Prostate gland (tissue), 2 donors: ENCODE measurements at regions of chr3 and their contacts with region 1.

Region 1: DNA sequence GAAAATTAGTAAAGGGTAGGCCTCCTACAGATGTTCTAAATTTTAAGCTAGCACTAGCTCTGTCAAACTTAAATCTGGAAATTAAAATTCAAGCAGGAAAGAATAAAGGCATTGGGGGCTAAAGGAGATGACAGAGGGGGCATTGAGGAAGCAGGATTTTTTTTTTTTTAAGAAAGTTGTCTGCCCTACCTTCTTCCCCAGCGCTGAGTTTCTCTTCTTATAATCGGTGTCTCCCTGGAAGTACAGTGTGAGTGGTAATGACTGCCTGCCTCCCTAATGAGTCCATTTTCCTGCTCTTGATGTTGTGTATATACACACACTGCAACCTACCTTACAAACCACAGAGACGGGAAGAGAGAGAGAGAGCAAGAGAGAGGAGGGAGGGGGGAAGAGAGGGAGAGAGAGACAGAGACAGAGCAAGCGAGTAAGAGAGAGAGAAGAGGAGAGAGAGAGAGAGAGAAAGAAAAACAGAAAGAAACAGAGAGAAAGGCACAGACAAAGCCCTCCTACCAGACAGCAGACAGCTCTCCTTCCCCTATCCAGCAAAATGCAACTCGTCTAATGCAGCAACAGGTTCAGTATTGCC is 47.0 kb downstream of the ZBTB20 start:
- DNase-seq: peak; percentile 33
- H3K4me3 ChIP-seq: peak overlapping the region; percentile 30 to 35
- H3K27ac ChIP-seq: peak overlapping the region; percentile 79 to 82
- H3K4me1 ChIP-seq: no peaks in the 10 kb centered on the region
- H3K27me3 ChIP-seq: no peaks in the 10 kb centered on the region
- CTCF ChIP-seq: no peak
- POLR2A ChIP-seq: no peak

Region 2: GRCh38 chr3:114848082-114848481 is 252.0 kb before region 1 on chr3:
- intact Hi-C with region 1: loop called (anchors 5 kb)
- DNase-seq: no peak
- H3K4me3 ChIP-seq: no peak overlapping the region
- H3K27ac ChIP-seq: no peak overlapping the region
- H3K4me1 ChIP-seq: peaks cover 4% of the 10 kb centered on the region
- H3K27me3 ChIP-seq: no peaks in the 10 kb centered on the region
- CTCF ChIP-seq: no peak
- POLR2A ChIP-seq: no peak

Region 3: GRCh38 chr3:115040673-115041286 is 59.3 kb before region 1 on chr3:
- intact Hi-C with region 1: loop called (anchors 5 kb)
- DNase-seq: no peak
- H3K4me3 ChIP-seq: no peak overlapping the region
- H3K27ac ChIP-seq: no peak overlapping the region
- H3K4me1 ChIP-seq: no peaks in the 10 kb centered on the region
- H3K27me3 ChIP-seq: no peaks in the 10 kb centered on the region
- CTCF ChIP-seq: peak in 3 of 4 experiments; percentile 10 to 48 (median 31)
- POLR2A ChIP-seq: no peak

Region 4: DNA sequence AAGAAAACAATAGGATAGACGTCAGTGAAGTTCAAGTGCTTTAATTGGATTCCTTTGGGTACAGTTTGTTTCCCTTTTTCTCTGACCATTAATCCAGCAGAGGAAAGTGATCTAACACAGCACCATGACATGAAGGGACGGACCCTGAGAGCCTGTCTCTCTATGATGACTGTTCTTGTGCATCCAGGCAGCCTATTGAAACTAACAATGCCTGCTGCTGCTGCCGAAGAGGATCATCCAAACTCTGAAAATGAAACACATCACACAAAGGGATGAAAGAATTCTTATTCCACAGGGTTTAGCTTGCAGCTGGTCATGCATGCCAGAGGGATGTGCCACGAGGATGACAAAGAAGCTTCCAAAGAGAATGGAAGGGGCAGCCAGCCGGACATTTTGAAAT is 28.5 kb before region 1 on chr3:
- intact Hi-C with region 1: no loop called
- DNase-seq: no peak
- H3K4me3 ChIP-seq: no peak overlapping the region
- H3K27ac ChIP-seq: peak overlapping the region in 1 of 2 donors; percentile 6
- H3K4me1 ChIP-seq: no peaks in the 10 kb centered on the region
- H3K27me3 ChIP-seq: no peaks in the 10 kb centered on the region
- CTCF ChIP-seq: no peak
- POLR2A ChIP-seq: no peak

Region 5: DNA sequence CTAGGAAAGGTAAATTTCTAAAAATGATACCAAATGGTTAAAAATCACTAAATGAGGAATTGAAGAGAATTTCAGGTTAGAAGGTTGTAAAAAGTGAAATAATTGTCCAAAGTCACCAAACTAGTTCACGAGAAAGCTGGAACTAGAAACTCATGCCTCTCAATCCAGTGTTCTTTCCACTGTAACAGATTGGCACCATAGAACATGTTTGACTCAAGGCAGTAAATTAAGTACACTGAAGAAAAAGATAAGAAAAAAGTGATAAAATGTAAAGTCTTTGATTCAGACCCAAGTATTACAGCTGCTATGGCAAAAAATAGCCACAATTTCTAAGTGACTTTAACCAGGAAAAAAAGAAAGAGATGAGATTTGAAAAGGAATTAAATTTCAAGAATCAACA is 20.5 kb after region 1 on chr3:
- intact Hi-C with region 1: no loop called
- DNase-seq: no peak
- H3K4me3 ChIP-seq: no peak overlapping the region
- H3K27ac ChIP-seq: no peak overlapping the region
- H3K4me1 ChIP-seq: no peaks in the 10 kb centered on the region
- H3K27me3 ChIP-seq: no peaks in the 10 kb centered on the region
- CTCF ChIP-seq: no peak
- POLR2A ChIP-seq: no peak